Sciatic nerve (tissue), 2 donors: ENCODE measurements at regions of chr10 and their contacts with region 1.

Region 1: GRCh38 chr10:120824881-120825309 is 26.3 kb upstream of the WDR11 start:
- DNase-seq: no peak
- ATAC-seq: peak; percentile 39

Region 2: GRCh38 chr10:120580918-120581895 is 243.7 kb before region 1 on chr10:
- intact Hi-C with region 1: no loop called
- DNase-seq: no peak
- ATAC-seq: no peak

Region 3: DNA sequence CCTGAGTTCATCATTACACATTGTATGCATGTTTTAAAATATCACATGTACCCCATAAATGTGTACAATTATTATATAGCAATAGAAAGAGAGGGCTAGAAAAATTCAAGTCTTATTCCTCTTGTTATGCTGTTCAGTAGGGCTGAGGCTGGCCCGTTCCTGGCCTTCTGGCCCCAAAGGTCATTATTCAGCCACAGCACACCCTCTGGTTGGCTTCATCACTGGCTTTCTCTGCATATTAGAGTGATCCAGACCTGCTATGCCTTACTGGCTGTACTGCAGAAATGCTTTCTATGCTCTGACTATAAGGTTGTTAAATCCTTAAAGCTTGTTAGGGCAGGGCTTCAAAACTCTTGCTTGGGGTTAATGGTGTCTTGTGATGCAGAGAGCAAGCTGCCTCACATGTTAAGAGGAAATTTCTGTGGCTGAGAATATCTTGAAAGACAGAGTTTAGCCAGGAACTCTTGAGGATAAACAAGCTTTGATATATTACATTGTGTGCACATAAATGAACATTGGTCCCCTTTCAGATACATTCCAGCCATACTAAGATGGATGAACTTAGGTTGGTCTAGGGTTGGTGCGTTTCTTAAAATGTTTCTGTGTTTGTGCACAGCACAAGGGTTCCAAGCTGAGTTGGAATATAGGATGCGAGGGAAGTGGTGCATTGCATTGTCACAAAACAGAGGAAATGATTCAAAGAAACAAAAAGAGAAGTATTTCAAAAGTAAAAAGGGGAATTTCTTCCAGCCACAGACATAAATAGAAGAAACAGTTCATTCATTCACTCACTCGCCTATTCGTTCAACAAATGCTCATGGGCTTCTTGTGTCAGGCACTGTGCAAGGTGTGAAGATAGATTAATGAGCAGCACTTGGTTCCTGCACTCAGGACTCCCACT is 35.3 kb before region 1 on chr10:
- intact Hi-C with region 1: no loop called
- DNase-seq: no peak
- ATAC-seq: peak; percentile 50

Region 4: DNA sequence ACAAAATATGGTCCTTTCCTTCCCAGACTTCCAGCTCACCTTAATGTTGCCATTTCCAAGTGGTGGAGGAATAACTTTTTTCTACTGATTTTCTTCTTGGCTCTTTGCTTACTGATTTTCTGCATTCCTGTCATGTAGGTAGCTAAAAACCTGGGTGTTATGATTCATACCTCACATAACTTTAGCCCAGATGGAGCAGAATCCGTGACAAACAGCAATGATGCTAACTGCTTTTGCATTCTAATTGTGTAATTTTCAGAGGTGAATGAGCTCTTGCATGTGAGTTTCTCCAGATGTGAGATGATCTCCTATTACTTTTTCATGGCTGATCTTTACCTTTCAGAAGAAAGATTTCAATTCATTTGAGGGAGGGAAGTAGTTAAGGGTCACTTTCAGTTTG is 69.7 kb after region 1 on chr10:
- intact Hi-C with region 1: loop called (anchors 2 kb)
- DNase-seq: no peak
- ATAC-seq: no peak